Caco-2 (cell line): ENCODE measurements at regions of chr2 and their contacts with region 1.

Region 1: GRCh38 chr2:197434541-197435513 is at the start of gene SF3B1:
- DNase-seq: peak; percentile 98
- H3K4me3 ChIP-seq: peak within 1 kb of the TSS; percentile 89
- H3K4me3 Mint-ChIP-seq: peak within 1 kb of the TSS; percentile 92
- H3K27ac Mint-ChIP-seq: peak within 1 kb of the TSS; percentile 100
- H3K4me1 ChIP-seq: peaks cover 6% of the 10 kb centered on the region; the same call in 1 of the 2 replicates
- H3K4me1 Mint-ChIP-seq: peaks cover 12% of the 10 kb centered on the region
- H3K27me3 ChIP-seq: no peaks in the 10 kb centered on the region
- H3K27me3 Mint-ChIP-seq: no peaks in the 10 kb centered on the region
- CTCF ChIP-seq: no peak
- total RNA-seq, gene SF3B1: 273 and 274 TPM in 2 replicates

Region 2: GRCh38 chr2:197423307-197423706 is 11.5 kb before region 1 on chr2:
- CTCF ChIA-PET with region 1: no interaction called
- POLR2A ChIA-PET with region 1: interaction called, 5 read pairs
- intact Hi-C with region 1: loop called (anchors 1 kb)
- DNase-seq: no peak
- H3K4me3 ChIP-seq: no peak overlapping the region
- H3K4me3 Mint-ChIP-seq: no peak overlapping the region
- H3K27ac Mint-ChIP-seq: no peak overlapping the region
- H3K4me1 ChIP-seq: peaks cover 12% of the 10 kb centered on the region; the same call in 1 of the 2 replicates
- H3K4me1 Mint-ChIP-seq: peaks cover 9% of the 10 kb centered on the region
- H3K27me3 ChIP-seq: no peaks in the 10 kb centered on the region
- H3K27me3 Mint-ChIP-seq: no peaks in the 10 kb centered on the region
- CTCF ChIP-seq: no peak

Region 3: GRCh38 chr2:197461057-197461456 is 26.2 kb after region 1 on chr2:
- CTCF ChIA-PET with region 1: interaction called, 4 read pairs
- POLR2A ChIA-PET with region 1: interaction called, 15 read pairs
- intact Hi-C with region 1: loop called (anchors 2 kb)
- DNase-seq: no peak
- H3K4me3 ChIP-seq: no peak overlapping the region
- H3K4me3 Mint-ChIP-seq: peak overlapping the region; percentile 34
- H3K27ac Mint-ChIP-seq: peak overlapping the region; percentile 92
- H3K4me1 ChIP-seq: peaks cover 18% of the 10 kb centered on the region
- H3K4me1 Mint-ChIP-seq: peaks cover 30% of the 10 kb centered on the region
- H3K27me3 ChIP-seq: no peaks in the 10 kb centered on the region
- H3K27me3 Mint-ChIP-seq: no peaks in the 10 kb centered on the region
- CTCF ChIP-seq: no peak

Region 4: DNA sequence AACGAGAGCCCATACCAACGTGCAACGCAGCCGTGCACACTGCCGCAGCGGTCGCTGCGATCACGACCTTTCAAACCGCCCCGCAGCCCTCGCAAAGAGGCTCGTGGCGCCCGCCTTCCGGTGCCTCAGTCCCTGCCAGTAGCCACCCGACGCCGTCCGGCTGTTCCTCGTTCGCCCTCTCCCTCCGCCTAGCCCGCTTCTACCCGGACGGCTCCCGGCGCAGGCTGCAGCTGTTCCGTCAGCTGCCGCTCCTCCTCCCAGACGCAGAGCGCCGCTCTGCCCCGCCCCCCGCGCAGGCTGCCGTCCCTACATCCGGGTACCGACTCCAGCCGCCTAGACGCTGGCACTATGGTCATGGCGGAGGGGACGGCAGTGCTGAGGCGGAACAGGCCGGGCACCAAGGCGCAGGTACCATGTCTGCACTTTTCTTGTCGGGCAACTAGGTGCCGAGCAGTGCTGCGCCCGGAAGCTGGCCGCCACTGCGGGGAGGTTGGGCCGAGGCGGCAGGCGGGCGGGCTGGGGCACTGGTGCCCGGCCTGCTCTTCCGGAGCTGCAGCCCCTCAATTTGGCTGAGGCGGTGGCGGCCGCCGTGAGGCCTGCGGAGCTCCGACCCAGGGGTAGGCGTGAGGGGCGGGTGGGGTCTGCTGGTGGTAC is 81.0 kb after region 1 on chr2 and contains the start of gene MOB4:
- CTCF ChIA-PET with region 1: no interaction called
- POLR2A ChIA-PET with region 1: interaction called, 6 read pairs
- intact Hi-C with region 1: loop called (anchors 5 kb)
- DNase-seq: peak; percentile 96 to 98
- H3K4me3 ChIP-seq: peak within 1 kb of the TSS; percentile 99
- H3K4me3 Mint-ChIP-seq: peak within 1 kb of the TSS; percentile 95
- H3K27ac Mint-ChIP-seq: peak within 1 kb of the TSS; percentile 91
- H3K4me1 ChIP-seq: peaks cover 15% of the 10 kb centered on the region
- H3K4me1 Mint-ChIP-seq: peaks cover 9% of the 10 kb centered on the region
- H3K27me3 ChIP-seq: no peaks in the 10 kb centered on the region
- H3K27me3 Mint-ChIP-seq: no peaks in the 10 kb centered on the region
- CTCF ChIP-seq: no peak
- total RNA-seq, gene MOB4: 27.2 and 31.1 TPM in 2 replicates

Region 5: GRCh38 chr2:197641666-197642065 is 206.8 kb after region 1 on chr2:
- CTCF ChIA-PET with region 1: no interaction called
- POLR2A ChIA-PET with region 1: no interaction called
- intact Hi-C with region 1: no loop called
- DNase-seq: no peak
- H3K4me3 ChIP-seq: no peak overlapping the region
- H3K4me3 Mint-ChIP-seq: no peak overlapping the region
- H3K27ac Mint-ChIP-seq: no peak overlapping the region
- H3K4me1 ChIP-seq: no peaks in the 10 kb centered on the region
- H3K4me1 Mint-ChIP-seq: no peaks in the 10 kb centered on the region
- H3K27me3 ChIP-seq: no peaks in the 10 kb centered on the region
- H3K27me3 Mint-ChIP-seq: peaks cover 7% of the 10 kb centered on the region
- CTCF ChIP-seq: no peak

Region 6: GRCh38 chr2:198251102-198251501 is 816.3 kb after region 1 on chr2:
- CTCF ChIA-PET with region 1: no interaction called
- POLR2A ChIA-PET with region 1: no interaction called
- intact Hi-C with region 1: no loop called
- DNase-seq: no peak
- H3K4me3 ChIP-seq: no peak overlapping the region
- H3K4me3 Mint-ChIP-seq: no peak overlapping the region
- H3K27ac Mint-ChIP-seq: no peak overlapping the region
- H3K4me1 ChIP-seq: no peaks in the 10 kb centered on the region
- H3K4me1 Mint-ChIP-seq: no peaks in the 10 kb centered on the region
- H3K27me3 ChIP-seq: no peaks in the 10 kb centered on the region
- H3K27me3 Mint-ChIP-seq: peaks cover 4% of the 10 kb centered on the region
- CTCF ChIP-seq: no peak